Brain microvascular endothelial cell (primary cell): ENCODE measurements at regions of chr2 and their contacts with region 1.

Region 1: GRCh38 chr2:163155279-163155883 is 316.8 kb upstream of the KCNH7 start:
- DNase-seq: no peak
- H3K4me3 ChIP-seq: no peak overlapping the region
- H3K27ac ChIP-seq: no peak overlapping the region
- H3K27me3 ChIP-seq: no peaks in the 10 kb centered on the region
- CTCF ChIP-seq: peak; percentile 55

Region 2: DNA sequence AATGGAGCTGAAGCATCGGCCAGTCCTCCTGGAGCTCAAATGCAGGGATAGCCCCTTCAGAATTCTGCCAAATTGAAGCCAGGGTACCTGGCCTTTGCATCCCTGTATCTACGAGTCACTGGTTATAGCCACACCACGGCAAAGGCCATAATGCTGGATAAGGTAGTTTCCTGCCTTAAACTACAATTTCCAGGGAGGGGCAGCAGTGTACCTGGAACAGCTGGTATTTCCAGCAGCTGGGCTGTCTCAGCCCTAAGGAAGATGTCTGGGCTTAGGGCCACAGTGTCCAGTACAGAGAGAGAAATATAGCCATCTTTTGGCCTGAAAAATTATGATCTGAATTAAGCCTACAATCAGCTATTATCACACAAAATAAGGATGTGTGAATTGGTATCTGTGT is 631.2 kb before region 1 on chr2:
- in situ Hi-C with region 1: no loop called
- DNase-seq: no peak
- H3K4me3 ChIP-seq: no peak overlapping the region
- H3K27ac ChIP-seq: no peak overlapping the region
- H3K27me3 ChIP-seq: no peaks in the 10 kb centered on the region
- CTCF ChIP-seq: no peak

Region 3: DNA sequence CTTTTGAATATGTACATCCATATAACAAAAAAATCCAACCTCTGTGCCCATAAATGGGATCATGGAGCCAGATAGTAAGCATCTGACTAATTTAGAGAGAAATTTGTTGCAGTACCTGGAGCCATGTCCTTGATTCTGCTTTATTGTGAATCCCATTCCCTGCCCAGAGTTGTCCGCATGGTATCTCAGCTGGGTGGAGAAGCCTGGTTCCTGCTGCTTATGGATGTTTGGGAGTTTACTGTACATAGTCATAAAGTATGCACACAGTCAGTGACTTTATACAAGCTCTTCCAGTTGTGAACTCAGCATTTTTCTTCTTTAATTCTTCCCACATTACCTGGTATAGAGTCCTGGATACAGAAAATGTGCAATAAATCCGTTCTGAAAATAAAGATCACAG is 234.5 kb after region 1 on chr2:
- in situ Hi-C with region 1: no loop called
- DNase-seq: no peak
- H3K4me3 ChIP-seq: no peak overlapping the region
- H3K27ac ChIP-seq: no peak overlapping the region
- H3K27me3 ChIP-seq: no peaks in the 10 kb centered on the region
- CTCF ChIP-seq: no peak

Region 4: DNA sequence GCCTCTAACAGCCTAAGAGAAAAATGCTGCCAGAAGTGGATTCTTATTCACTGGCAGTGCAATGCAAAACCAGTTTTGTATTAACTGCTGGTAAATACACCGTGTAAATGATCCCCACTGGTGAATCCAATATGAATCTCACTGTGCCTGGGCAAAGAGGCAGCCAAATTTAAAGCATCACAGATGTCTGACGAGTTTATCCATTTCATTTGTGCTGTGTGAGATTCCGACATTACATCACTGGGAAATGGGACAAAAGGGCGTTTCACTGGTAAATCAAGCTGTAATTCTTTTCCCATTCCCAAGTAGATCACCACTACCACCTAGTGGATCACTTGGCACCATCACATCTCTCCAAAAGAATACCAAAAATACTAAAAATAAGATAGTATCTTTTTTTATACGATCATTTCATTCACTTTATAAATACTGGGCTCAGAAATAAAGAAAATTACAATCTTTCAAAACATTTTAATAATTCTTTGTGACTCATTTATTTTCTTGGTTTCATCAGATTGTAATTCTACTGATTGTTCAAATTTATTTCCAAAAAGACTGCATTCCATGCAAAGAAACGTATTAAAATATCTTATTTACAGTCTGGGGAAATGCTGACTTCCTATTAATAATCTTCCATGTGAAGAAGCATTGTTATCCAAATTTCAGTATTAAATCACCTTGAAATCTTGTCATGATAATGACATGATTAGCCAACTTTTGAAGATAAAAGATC is 1340.3 kb after region 1 on chr2:
- in situ Hi-C with region 1: loop called (anchors 25 kb)
- DNase-seq: peak; percentile 44
- H3K4me3 ChIP-seq: peak overlapping the region; percentile 3
- H3K27ac ChIP-seq: no peak overlapping the region
- H3K27me3 ChIP-seq: no peaks in the 10 kb centered on the region
- CTCF ChIP-seq: peak; percentile 69